Ascending aorta (tissue), 2 donors: ENCODE measurements at regions of chr4 and their contacts with region 1.

Region 1: GRCh38 chr4:150078637-150079581 is 664 bp downstream of the DCLK2 start:
- DNase-seq: peak in 1 of 2 donors; percentile 83
- H3K4me3 ChIP-seq: peak overlapping the region; percentile 86 to 89
- H3K27ac ChIP-seq: peak overlapping the region; percentile 89
- H3K4me1 ChIP-seq: peaks cover 3 to 9% of the 10 kb centered on the region in 2 donors
- H3K27me3 ChIP-seq: no peaks in the 10 kb centered on the region
- CTCF ChIP-seq: peak in 1 of 3 experiments; percentile 29

Region 2: GRCh38 chr4:150010525-150011126 is 68.3 kb before region 1 on chr4:
- intact Hi-C with region 1: loop called (anchors 2 kb)
- DNase-seq: peak in 1 of 2 donors; percentile 68
- H3K4me3 ChIP-seq: no peak overlapping the region
- H3K27ac ChIP-seq: no peak overlapping the region
- H3K4me1 ChIP-seq: peaks cover 4 to 19% of the 10 kb centered on the region in 2 donors
- H3K27me3 ChIP-seq: no peaks in the 10 kb centered on the region
- CTCF ChIP-seq: peak; percentile 39 to 59 (median 54)

Region 3: DNA sequence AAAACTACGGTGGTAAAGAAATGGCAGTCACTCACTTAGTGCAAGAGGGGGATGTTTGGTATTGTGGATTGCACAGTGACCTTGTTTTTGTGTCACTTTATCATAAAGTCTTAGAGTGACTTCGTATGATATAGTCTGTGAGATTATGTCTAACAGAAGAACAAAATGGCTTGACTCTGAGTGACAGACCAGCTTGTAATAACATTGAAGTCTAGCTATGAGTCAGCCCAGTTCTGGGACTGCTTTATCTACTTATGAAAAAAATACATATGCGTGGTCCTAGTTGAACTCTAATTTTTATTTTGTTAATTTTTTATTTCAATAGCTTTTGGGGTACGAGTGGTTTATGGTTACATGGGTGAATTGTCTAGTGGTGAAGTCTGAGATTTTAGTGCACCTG is 19.3 kb after region 1 on chr4:
- intact Hi-C with region 1: loop called (anchors 2 kb)
- DNase-seq: no peak
- H3K4me3 ChIP-seq: peak overlapping the region in 1 of 2 donors; percentile 22
- H3K27ac ChIP-seq: peak overlapping the region; percentile 32 to 72
- H3K4me1 ChIP-seq: peaks cover 0 to 3% of the 10 kb centered on the region in 2 donors
- H3K27me3 ChIP-seq: no peaks in the 10 kb centered on the region
- CTCF ChIP-seq: no peak

Region 4: GRCh38 chr4:150119492-150119891 is 40.6 kb after region 1 on chr4:
- intact Hi-C with region 1: loop called (anchors 1 kb)
- DNase-seq: no peak
- H3K4me3 ChIP-seq: no peak overlapping the region
- H3K27ac ChIP-seq: peak overlapping the region; percentile 28 to 52
- H3K4me1 ChIP-seq: peaks cover 0 to 32% of the 10 kb centered on the region in 2 donors
- H3K27me3 ChIP-seq: no peaks in the 10 kb centered on the region
- CTCF ChIP-seq: no peak

Region 5: GRCh38 chr4:150140774-150141400 is 62.0 kb after region 1 on chr4:
- intact Hi-C with region 1: loop called (anchors 5 kb)
- DNase-seq: no peak
- H3K4me3 ChIP-seq: no peak overlapping the region
- H3K27ac ChIP-seq: peak overlapping the region in 1 of 2 donors; percentile 65
- H3K4me1 ChIP-seq: peaks cover 0 to 33% of the 10 kb centered on the region in 2 donors
- H3K27me3 ChIP-seq: no peaks in the 10 kb centered on the region
- CTCF ChIP-seq: no peak

Region 6: GRCh38 chr4:150209140-150209829 is 130.4 kb after region 1 on chr4:
- intact Hi-C with region 1: loop called (anchors 2 kb)
- DNase-seq: peak in 1 of 2 donors; percentile 85
- H3K4me3 ChIP-seq: no peak overlapping the region
- H3K27ac ChIP-seq: no peak overlapping the region
- H3K4me1 ChIP-seq: peaks cover 0 to 4% of the 10 kb centered on the region in 2 donors
- H3K27me3 ChIP-seq: no peaks in the 10 kb centered on the region
- CTCF ChIP-seq: peak; percentile 31 to 61 (median 46)

Region 7: DNA sequence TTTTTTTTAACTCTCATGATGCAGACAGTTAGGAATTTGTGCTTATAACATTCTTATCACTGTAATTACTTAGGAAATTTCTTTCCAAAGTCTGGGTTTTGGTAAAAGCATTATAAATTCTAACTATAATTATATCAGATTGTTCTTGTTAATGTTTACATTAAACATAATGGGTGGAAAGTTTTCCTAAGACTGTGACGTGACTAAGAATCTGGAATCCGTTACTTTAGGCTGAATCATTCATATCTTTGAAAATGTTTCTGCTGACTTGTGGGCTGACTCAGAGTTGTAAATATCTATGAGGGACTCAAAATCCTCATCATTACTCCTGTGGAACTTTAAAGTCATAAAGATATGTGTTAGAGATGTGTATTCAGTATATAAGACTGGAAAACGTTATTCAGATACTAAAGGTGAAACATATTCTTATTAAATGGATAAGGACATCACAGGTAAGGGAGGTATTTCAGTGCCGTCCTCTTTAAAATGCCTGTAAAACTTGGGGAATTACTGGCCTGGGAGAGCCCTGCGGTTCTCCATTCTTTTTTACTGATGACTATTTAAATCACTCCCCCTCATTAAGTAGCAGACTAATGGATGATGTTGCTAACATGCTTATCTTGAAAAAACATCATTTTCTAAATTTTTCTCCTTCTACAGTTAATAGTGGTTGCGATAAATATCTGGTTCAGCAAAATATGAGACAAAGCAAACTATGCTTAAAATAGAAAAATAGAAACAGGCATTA is 158.4 kb after region 1 on chr4:
- intact Hi-C with region 1: loop called (anchors 2 kb)
- DNase-seq: no peak
- H3K4me3 ChIP-seq: peak overlapping the region in 1 of 2 donors; percentile 4
- H3K27ac ChIP-seq: peak overlapping the region; percentile 75 to 82
- H3K4me1 ChIP-seq: peaks cover 0 to 21% of the 10 kb centered on the region in 2 donors
- H3K27me3 ChIP-seq: no peaks in the 10 kb centered on the region
- CTCF ChIP-seq: no peak